Ascending aorta (tissue), 2 donors: ENCODE measurements at regions of chr11 and their contacts with region 1.

Region 1: GRCh38 chr11:64778508-64779346 is at the start of gene SF1:
- DNase-seq: peak; percentile 98 to 99
- H3K4me3 ChIP-seq: peak within 1 kb of the TSS; percentile 85 to 95
- H3K27ac ChIP-seq: peak within 1 kb of the TSS; percentile 99 to 100
- H3K4me1 ChIP-seq: peaks cover 17 to 34% of the 10 kb centered on the region in 2 donors
- H3K27me3 ChIP-seq: no peaks in the 10 kb centered on the region
- CTCF ChIP-seq: peak in 1 of 3 experiments; percentile 8
- total RNA-seq, gene SF1: 332 TPM

Region 2: DNA sequence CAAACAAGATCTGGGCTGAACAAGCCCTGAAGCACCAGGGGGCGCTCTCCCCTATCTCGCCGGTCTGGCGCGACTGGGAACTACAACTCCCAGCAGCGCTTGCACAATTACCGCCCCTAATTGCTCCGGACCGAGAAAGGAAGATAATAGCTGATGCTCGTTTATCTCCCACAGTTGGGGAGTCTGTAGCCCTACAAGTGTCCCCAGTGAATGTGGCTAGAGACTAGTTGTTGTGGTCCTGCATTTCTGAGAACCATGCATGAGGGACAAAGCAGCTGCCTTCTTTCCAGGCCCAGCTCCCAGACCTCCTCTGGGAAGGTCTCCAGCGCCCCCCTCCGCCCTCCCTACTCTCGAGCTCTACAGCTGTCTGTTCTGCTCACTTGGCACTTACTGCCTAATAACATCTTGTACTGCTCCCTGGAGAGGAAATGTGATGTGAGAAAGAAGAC is 90.2 kb before region 1 on chr11:
- intact Hi-C with region 1: no loop called
- DNase-seq: peak; percentile 39 to 93
- H3K4me3 ChIP-seq: peak overlapping the region; percentile 28 to 62
- H3K27ac ChIP-seq: peak overlapping the region; percentile 78 to 89
- H3K4me1 ChIP-seq: peaks cover 20 to 24% of the 10 kb centered on the region in 2 donors
- H3K27me3 ChIP-seq: no peaks in the 10 kb centered on the region
- CTCF ChIP-seq: peak; percentile 88 to 92 (median 91)

Region 3: GRCh38 chr11:64742889-64743590 is 35.7 kb before region 1 on chr11:
- intact Hi-C with region 1: loop called (anchors 1 kb)
- DNase-seq: peak; percentile 34 to 90
- H3K4me3 ChIP-seq: peak overlapping the region; percentile 86 to 89
- H3K27ac ChIP-seq: peak overlapping the region; percentile 91 to 98
- H3K4me1 ChIP-seq: peaks cover 4 to 11% of the 10 kb centered on the region in 2 donors
- H3K27me3 ChIP-seq: no peaks in the 10 kb centered on the region
- CTCF ChIP-seq: peak; percentile 76 to 88 (median 81)

Region 4: GRCh38 chr11:64759561-64760349 is 19.0 kb before region 1 on chr11 and contains the start of gene PYGM:
- intact Hi-C with region 1: loop called (anchors 2 kb)
- DNase-seq: peak; percentile 60 to 95
- H3K4me3 ChIP-seq: peak within 1 kb of the TSS; percentile 42 to 57
- H3K27ac ChIP-seq: peak within 1 kb of the TSS; percentile 75 to 80
- H3K4me1 ChIP-seq: peaks cover 22 to 48% of the 10 kb centered on the region in 2 donors
- H3K27me3 ChIP-seq: no peaks in the 10 kb centered on the region
- CTCF ChIP-seq: no peak
- total RNA-seq, gene PYGM: 13.9 TPM

Region 5: GRCh38 chr11:64803163-64803845 is 24.6 kb after region 1 on chr11 and contains the start of gene MAP4K2:
- intact Hi-C with region 1: loop called (anchors 1 kb)
- DNase-seq: peak; percentile 51 to 95
- H3K4me3 ChIP-seq: peak within 1 kb of the TSS; percentile 65 to 80
- H3K27ac ChIP-seq: peak within 1 kb of the TSS; percentile 91 to 94
- H3K4me1 ChIP-seq: peaks cover 8 to 18% of the 10 kb centered on the region in 2 donors
- H3K27me3 ChIP-seq: no peaks in the 10 kb centered on the region
- CTCF ChIP-seq: peak in 1 of 3 experiments; percentile 15
- total RNA-seq, gene MAP4K2: 34.0 TPM

Region 6: DNA sequence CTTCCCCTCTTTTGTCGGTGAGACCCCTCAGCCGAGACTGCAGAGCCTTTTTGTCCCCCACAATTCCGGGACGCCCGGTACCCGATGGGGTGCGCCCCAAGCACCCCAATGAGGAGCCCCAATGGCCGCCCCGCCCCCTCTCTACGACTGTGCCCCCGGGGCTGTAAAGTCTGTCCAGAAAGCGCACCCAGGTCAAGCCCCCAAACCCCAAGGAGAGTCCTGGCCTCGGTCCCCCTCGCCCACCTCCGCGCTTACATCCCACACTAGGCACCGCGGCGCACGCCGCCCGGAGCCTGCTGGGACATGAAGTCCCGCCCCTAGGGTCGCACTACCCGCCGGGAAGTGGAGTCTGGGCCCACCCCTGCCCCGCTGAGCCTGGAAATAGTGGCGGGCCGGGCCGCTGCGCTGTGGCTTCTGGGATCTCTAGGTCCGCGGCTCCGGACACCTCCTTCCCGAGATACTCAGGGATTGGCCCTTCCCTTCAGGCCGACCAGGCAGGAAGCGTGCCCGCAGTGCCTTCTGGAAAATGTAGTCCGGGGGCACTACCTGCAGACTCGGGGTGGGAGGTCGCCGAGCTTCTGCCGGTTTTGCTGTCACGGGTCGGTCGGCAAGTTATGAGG is 31.7 kb after region 1 on chr11 and contains the start of gene MEN1:
- intact Hi-C with region 1: loop called (anchors 2 kb)
- DNase-seq: peak; percentile 84 to 98
- H3K4me3 ChIP-seq: peak within 1 kb of the TSS; percentile 87 to 91
- H3K27ac ChIP-seq: peak within 1 kb of the TSS; percentile 61 to 67
- H3K4me1 ChIP-seq: peaks cover 0 to 9% of the 10 kb centered on the region in 2 donors
- H3K27me3 ChIP-seq: no peaks in the 10 kb centered on the region
- CTCF ChIP-seq: no peak
- total RNA-seq, gene MEN1: 36.6 TPM

Region 7: GRCh38 chr11:65060913-65061408 is 282.2 kb after region 1 on chr11:
- intact Hi-C with region 1: no loop called
- DNase-seq: no peak
- H3K4me3 ChIP-seq: no peak overlapping the region
- H3K27ac ChIP-seq: no peak overlapping the region
- H3K4me1 ChIP-seq: no peaks in the 10 kb centered on the region
- H3K27me3 ChIP-seq: no peaks in the 10 kb centered on the region
- CTCF ChIP-seq: no peak

Region 8: DNA sequence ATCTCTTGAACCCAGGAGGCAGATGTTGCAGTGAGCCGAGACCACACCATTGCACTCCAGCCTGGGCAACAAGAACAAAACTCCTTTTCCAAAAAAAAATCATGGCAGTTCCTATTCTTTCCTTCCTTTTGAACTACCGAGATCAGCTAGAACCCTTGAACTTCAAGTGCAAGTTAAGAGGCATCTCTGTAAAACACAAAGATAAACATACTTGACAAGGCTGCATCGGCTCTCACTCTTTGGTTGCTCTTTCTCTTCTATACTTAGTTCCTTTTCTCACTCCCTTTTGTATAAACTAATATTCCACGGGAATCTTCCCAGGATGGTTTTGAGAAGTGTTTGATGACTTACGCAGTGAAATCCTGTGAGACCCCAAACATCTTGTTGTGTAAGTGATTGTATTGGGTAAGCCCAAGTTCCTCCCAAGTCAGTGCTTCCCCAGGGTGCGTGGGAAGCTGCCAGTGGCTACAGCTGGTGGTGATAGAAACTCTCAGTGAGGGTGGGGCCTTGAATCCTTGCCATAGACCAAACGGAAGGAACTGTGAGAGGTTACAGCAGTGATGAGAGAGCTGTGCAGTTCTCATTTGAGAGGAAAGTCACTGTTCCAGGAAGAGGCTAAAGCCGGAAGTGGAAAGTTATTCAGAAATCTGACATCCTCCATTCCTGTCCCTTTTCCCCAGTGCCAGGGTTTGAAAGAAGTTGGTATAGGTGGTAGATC is 511.9 kb after region 1 on chr11:
- intact Hi-C with region 1: no loop called
- DNase-seq: peak; percentile 68 to 92
- H3K4me3 ChIP-seq: no peak overlapping the region
- H3K27ac ChIP-seq: peak overlapping the region; percentile 71 to 76
- H3K4me1 ChIP-seq: peaks cover 0 to 6% of the 10 kb centered on the region in 2 donors
- H3K27me3 ChIP-seq: no peaks in the 10 kb centered on the region
- CTCF ChIP-seq: no peak